Calu3 (cell line): ENCODE measurements at regions of chr16 and their contacts with region 1.

Region 1: GRCh38 chr16:4402439-4403132 is 13.8 kb downstream of the CORO7 start:
- DNase-seq: peak; percentile 92
- H3K4me3 Mint-ChIP-seq: no peak overlapping the region
- H3K27ac Mint-ChIP-seq: no peak overlapping the region
- H3K4me1 Mint-ChIP-seq: no peaks in the 10 kb centered on the region
- H3K27me3 Mint-ChIP-seq: no peaks in the 10 kb centered on the region
- CTCF ChIP-seq: peak; percentile 99

Region 2: DNA sequence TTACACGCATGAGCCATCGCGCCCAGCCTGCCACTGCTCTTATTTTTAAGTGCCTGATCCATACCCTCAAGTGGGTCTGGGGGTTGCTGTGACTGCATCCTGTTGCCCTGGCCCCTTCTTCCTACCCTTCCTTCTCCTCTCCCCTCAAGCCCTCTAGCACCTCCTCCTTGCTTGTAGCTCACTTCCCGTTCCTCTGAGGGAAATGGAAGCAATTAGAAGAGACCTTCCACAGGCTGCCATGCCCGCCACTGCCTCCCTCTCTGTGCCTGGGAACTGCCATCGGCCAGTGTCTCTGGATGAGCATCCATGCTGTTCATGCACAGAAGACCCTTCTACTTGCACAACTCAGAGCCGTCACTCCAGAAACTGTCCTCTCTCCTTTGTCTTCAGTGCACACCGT is 119.1 kb before region 1 on chr16:
- CTCF ChIA-PET with region 1: no interaction called
- intact Hi-C with region 1: no loop called
- DNase-seq: no peak
- H3K4me3 Mint-ChIP-seq: no peak overlapping the region
- H3K27ac Mint-ChIP-seq: no peak overlapping the region
- H3K4me1 Mint-ChIP-seq: peaks cover 18% of the 10 kb centered on the region
- H3K27me3 Mint-ChIP-seq: no peaks in the 10 kb centered on the region
- CTCF ChIP-seq: no peak

Region 3: DNA sequence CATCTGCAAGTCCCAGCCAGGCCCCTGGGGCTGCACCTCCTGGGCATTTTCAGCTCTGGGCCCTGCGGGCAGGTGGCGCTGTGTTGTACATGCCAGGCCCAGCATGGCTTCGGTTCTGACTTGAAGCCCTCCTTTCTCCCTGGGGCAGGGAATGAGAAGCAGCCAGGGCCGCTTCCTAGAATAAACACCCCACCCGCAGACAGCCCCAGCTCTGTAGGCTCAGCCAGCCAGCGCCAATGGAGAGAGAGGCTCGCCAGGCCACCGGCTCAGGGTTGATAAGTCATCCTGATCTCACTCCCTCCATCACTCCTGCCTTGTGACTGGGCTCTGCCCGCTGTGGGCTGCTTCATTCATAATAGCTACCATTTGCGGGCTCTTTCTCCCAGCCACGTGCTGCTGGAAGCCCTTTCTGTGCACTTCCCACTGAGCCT is 92.7 kb before region 1 on chr16:
- CTCF ChIA-PET with region 1: interaction called, 11 read pairs
- intact Hi-C with region 1: no loop called
- DNase-seq: peak; percentile 91
- H3K4me3 Mint-ChIP-seq: no peak overlapping the region
- H3K27ac Mint-ChIP-seq: no peak overlapping the region
- H3K4me1 Mint-ChIP-seq: peaks cover 34% of the 10 kb centered on the region
- H3K27me3 Mint-ChIP-seq: no peaks in the 10 kb centered on the region
- CTCF ChIP-seq: peak; percentile 84

Region 4: DNA sequence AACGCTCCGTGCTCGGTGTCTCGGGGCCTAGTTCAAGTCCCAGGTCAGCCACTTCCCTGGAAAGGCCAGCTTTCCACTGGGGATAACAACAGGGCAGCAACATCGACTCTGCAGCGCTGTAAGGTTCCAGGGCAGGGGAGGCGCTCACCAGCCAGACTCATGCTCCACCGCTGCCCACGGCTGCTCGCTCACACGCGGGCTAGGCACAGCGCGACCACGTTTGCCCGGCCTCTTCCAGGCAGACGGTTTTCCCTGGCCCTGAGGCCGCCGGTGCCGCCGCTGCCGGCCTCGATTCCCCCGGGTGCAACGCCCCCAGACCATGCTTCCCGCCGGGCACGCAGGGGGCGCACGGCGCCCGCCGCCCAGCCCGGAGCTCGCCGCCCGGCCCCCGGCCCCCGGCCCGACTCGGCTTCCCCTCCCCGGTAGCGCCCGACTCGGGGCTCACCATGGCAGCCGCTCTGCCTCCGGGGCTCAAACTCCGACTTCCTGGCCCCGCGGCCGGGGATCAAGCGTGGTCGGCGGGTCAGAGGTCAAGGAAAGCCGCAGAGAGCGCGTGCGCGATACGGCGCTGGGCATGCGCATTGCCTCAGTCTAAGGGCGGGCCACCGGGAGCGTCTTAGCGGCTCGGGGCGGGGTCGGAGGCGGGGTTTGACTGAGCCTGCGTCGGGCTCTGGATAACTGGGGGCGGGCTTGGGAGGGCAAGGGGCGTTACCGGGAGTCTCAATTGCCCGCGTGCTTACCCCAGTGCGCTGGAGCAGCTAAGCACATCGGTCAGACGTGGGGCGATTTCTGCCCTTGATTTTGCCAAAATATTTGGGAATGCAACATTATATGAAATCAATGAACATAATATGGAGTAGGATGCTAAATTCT is 51.6 kb before region 1 on chr16 and contains the start of gene PAM16:
- CTCF ChIA-PET with region 1: interaction called, 13 read pairs
- intact Hi-C with region 1: no loop called
- DNase-seq: peak; percentile 99
- H3K4me3 Mint-ChIP-seq: peak within 1 kb of the TSS; percentile 90
- H3K27ac Mint-ChIP-seq: peak within 1 kb of the TSS; percentile 89
- H3K4me1 Mint-ChIP-seq: peaks cover 17% of the 10 kb centered on the region
- H3K27me3 Mint-ChIP-seq: no peaks in the 10 kb centered on the region
- CTCF ChIP-seq: no peak
- total RNA-seq, gene PAM16: 72.7 and 85.3 TPM in 2 replicates

Region 5: GRCh38 chr16:4358831-4359561 is 43.6 kb before region 1 on chr16:
- CTCF ChIA-PET with region 1: interaction called, 53 read pairs
- intact Hi-C with region 1: loop called (anchors 1 kb)
- DNase-seq: peak; percentile 87
- H3K4me3 Mint-ChIP-seq: no peak overlapping the region
- H3K27ac Mint-ChIP-seq: no peak overlapping the region
- H3K4me1 Mint-ChIP-seq: peaks cover under 1% of the 10 kb centered on the region
- H3K27me3 Mint-ChIP-seq: no peaks in the 10 kb centered on the region
- CTCF ChIP-seq: peak; percentile 100

Region 6: GRCh38 chr16:4373863-4374742 is 28.5 kb before region 1 on chr16:
- CTCF ChIA-PET with region 1: interaction called, 14 read pairs
- intact Hi-C with region 1: no loop called
- DNase-seq: peak; percentile 82
- H3K4me3 Mint-ChIP-seq: peak overlapping the region; percentile 75
- H3K27ac Mint-ChIP-seq: peak overlapping the region; percentile 95
- H3K4me1 Mint-ChIP-seq: peaks cover 59% of the 10 kb centered on the region
- H3K27me3 Mint-ChIP-seq: no peaks in the 10 kb centered on the region
- CTCF ChIP-seq: no peak

Region 7: DNA sequence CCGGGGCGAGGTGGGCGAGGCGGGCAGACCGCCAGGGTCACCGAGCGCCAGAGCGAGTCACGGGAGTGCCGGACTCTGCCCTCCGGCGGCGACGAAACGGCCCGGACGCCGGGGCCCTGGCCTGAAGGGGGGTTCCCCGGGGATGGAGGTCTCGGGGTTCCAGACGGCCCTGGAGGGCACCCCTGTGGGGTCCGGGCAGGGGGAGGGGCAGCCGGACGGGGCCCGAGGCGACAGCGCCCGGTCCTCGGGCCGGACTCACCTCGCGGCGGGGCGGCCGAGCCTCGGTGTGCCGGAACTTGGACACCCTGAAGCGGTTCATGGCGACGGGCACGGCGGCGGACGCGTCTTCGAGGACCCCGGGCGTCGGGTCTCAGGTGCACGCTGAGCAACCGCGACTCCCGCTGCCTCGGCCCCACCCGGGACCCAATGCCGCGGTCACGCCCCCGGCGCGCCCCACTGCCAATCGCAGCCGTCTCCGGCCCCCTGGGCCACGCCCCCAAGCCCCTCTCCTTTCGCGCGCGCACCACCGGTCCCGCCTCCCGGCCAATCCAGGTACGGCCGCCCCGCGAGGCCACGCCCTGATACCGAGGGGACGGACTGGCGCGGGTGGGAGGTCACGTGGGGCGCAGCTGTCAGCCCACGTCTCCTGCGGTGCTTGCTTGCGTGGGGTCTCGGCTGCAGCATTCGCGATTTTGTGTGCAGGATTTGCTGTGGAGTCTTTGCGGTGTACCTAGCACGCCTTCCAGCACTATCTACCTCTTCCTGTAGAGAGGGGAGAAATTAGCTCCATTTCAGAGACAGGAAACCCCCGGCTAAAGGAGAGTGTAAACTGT is 13.8 kb after region 1 on chr16 and contains the start of gene CORO7:
- CTCF ChIA-PET with region 1: interaction called, 14 read pairs
- intact Hi-C with region 1: no loop called
- DNase-seq: peak; percentile 99
- H3K4me3 Mint-ChIP-seq: peak within 1 kb of the TSS; percentile 73
- H3K27ac Mint-ChIP-seq: peak within 1 kb of the TSS; percentile 2
- H3K4me1 Mint-ChIP-seq: peaks cover 15% of the 10 kb centered on the region
- H3K27me3 Mint-ChIP-seq: no peaks in the 10 kb centered on the region
- CTCF ChIP-seq: no peak
- total RNA-seq, gene CORO7: 49.7 and 51.0 TPM in 2 replicates

Region 8: DNA sequence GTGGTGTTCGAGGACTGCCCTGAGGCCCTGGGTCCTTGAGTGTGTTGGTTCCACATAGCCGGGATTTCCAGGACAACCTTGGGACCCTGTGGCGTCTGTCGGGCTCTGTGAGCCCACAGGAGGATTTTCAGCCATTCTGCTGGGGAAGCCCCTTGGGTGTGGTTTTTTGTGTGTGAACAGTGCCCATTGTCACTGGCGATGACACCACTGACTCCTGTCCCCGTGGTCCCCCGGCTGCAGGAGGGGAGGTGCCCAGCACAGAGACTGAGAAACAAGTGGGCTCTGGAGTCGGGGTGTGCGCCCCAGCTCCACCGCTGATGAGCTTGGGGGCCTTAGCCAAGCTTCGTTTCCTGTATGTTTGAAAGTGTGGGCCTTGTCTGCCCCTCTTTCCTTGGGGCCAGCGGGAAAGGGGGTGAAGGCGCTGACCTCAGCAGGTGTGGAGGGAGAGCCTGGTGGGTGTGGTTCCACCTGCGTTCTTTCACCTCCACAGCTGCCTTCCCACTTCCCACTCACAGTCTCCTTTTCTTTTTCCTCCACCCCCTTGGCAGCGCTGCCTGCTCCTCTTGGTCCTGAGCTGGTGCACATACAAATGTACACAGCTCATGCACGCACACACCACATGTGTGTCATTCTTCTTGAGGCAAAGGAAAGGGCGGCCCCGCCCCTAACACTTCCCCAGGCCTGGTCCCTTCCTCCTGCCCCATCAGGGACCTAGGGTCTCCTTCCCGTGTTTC is 238.2 kb after region 1 on chr16:
- CTCF ChIA-PET with region 1: no interaction called
- intact Hi-C with region 1: no loop called
- DNase-seq: no peak
- H3K4me3 Mint-ChIP-seq: no peak overlapping the region
- H3K27ac Mint-ChIP-seq: no peak overlapping the region
- H3K4me1 Mint-ChIP-seq: peaks cover 6% of the 10 kb centered on the region
- H3K27me3 Mint-ChIP-seq: no peaks in the 10 kb centered on the region
- CTCF ChIP-seq: no peak